ENCODE measurements at regions of chrX and their contacts with region 1.

Region 1: GRCh38 chrX:45689971-45690370 is 489.3 kb upstream of the DIPK2B start:
- DNase-seq: no peak
- ATAC-seq: no peak
- H3K4me3 ChIP-seq: no peak overlapping the region
- H3K27ac ChIP-seq: no peak overlapping the region
- H3K4me1 ChIP-seq: no peaks in the 10 kb centered on the region
- H3K27me3 ChIP-seq: no peaks in the 10 kb centered on the region
- CTCF ChIP-seq: no peak

Region 2: DNA sequence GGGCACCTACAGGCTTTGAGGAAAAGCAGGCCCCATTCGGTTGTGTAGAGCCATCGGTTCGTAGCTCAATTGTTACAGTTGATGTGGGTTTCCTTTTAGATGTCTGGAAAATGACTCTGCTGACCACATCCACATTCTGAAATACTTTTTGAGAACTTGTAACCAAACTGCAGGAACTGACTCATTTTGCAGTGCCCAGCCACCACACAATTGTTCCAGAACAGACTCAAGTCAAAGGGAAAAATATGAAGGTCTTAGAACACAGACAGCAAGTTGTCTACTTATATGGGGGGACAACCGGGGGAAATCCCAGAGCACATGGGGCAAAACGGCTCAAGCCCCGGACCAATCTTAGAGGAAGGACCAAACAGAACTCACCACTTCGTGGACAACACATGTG is 68.3 kb after region 1 on chrX:
- CTCF ChIA-PET with region 1: no interaction called
- POLR2A ChIA-PET with region 1: interaction called, 10 read pairs
- in situ Hi-C with region 1: no loop called
- intact Hi-C with region 1: no loop called
- DNase-seq: no peak
- ATAC-seq: peak; percentile 55
- H3K4me3 ChIP-seq: no peak overlapping the region
- H3K27ac ChIP-seq: peak overlapping the region; percentile 54
- H3K4me1 ChIP-seq: peaks cover 18% of the 10 kb centered on the region
- H3K27me3 ChIP-seq: no peaks in the 10 kb centered on the region
- CTCF ChIP-seq: no peak